AG04450 (cell line): ENCODE measurements at regions of chr20 and their contacts with region 1.

Region 1: GRCh38 chr20:23245553-23246181 is 104.9 kb upstream of the NXT1 start:
- DNase-seq: no peak
- H3K4me3 ChIP-seq: no peak overlapping the region
- H3K27ac ChIP-seq: no peak overlapping the region
- H3K27me3 ChIP-seq: peaks cover 21% of the 10 kb centered on the region
- CTCF ChIP-seq: peak; percentile 65

Region 2: GRCh38 chr20:23009636-23010035 is 236.0 kb before region 1 on chr20:
- CTCF ChIA-PET with region 1: no interaction called
- POLR2A ChIA-PET with region 1: no interaction called
- DNase-seq: no peak
- H3K4me3 ChIP-seq: no peak overlapping the region
- H3K27ac ChIP-seq: no peak overlapping the region
- H3K27me3 ChIP-seq: no peaks in the 10 kb centered on the region
- CTCF ChIP-seq: no peak

Region 3: GRCh38 chr20:23235173-23236027 is 10.3 kb before region 1 on chr20:
- CTCF ChIA-PET with region 1: interaction called, 25 read pairs
- POLR2A ChIA-PET with region 1: no interaction called
- DNase-seq: no peak
- H3K4me3 ChIP-seq: no peak overlapping the region
- H3K27ac ChIP-seq: no peak overlapping the region
- H3K27me3 ChIP-seq: peaks cover 6% of the 10 kb centered on the region
- CTCF ChIP-seq: peak; percentile 77

Region 4: GRCh38 chr20:23257848-23258746 is 12.4 kb after region 1 on chr20:
- CTCF ChIA-PET with region 1: interaction called, 18 read pairs
- POLR2A ChIA-PET with region 1: no interaction called
- DNase-seq: peak; percentile 59
- H3K4me3 ChIP-seq: no peak overlapping the region
- H3K27ac ChIP-seq: peak overlapping the region; percentile 68
- H3K27me3 ChIP-seq: peaks cover 4% of the 10 kb centered on the region
- CTCF ChIP-seq: no peak